ENCODE measurements at regions of chr7 and their contacts with region 1.

Region 1: GRCh38 chr7:45663167-45663921 is 89.2 kb downstream of the ADCY1 start:
- DNase-seq: no peak
- H3K4me3 ChIP-seq: no peak overlapping the region
- H3K27ac ChIP-seq: no peak overlapping the region
- H3K4me1 ChIP-seq: no peaks in the 10 kb centered on the region
- H3K27me3 ChIP-seq: no peaks in the 10 kb centered on the region
- CTCF ChIP-seq: peak; percentile 50 to 75

Region 2: GRCh38 chr7:45153233-45153632 is 510.1 kb before region 1 on chr7:
- CTCF ChIA-PET with region 1: no interaction called
- dilution Hi-C with region 1: no loop called
- in situ Hi-C with region 1: no loop called
- intact Hi-C with region 1: loop called (anchors 5 kb)
- DNase-seq: no peak
- H3K4me3 ChIP-seq: no peak overlapping the region
- H3K27ac ChIP-seq: no peak overlapping the region
- H3K4me1 ChIP-seq: no peaks in the 10 kb centered on the region
- H3K27me3 ChIP-seq: peaks cover 6% of the 10 kb centered on the region
- CTCF ChIP-seq: no peak

Region 3: DNA sequence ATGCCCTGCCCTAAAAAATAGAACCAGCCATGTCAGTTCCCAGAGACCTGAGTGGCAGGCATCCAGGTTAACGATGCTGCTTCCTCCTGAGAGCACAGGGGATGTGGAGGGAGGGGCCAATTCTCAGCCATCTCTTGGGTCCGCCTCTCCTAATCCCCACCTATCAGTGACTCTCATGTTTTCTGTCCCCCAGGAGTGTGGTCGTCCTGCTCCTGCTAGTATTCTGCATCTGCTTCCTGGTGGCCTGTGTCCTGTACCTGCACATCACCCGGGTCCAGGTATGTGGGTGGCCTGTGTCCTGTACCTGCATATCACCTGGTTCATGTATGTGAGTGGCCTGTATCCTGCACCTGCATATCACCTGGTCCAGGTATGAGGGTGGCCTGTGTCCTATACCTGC is 16.2 kb after region 1 on chr7:
- CTCF ChIA-PET with region 1: no interaction called
- dilution Hi-C with region 1: no loop called
- in situ Hi-C with region 1: no loop called
- intact Hi-C with region 1: no loop called
- DNase-seq: no peak
- H3K4me3 ChIP-seq: no peak overlapping the region
- H3K27ac ChIP-seq: no peak overlapping the region
- H3K4me1 ChIP-seq: no peaks in the 10 kb centered on the region
- H3K27me3 ChIP-seq: no peaks in the 10 kb centered on the region
- CTCF ChIP-seq: no peak

Measured in mammary epithelial cell (primary cell).